Activated naive CD4-positive, alpha-beta T cell treated with anti-CD3 and anti-CD28 coated beads for 36 hours (primary cell): ENCODE measurements at regions of chr5 and their contacts with region 1.

Region 1: DNA sequence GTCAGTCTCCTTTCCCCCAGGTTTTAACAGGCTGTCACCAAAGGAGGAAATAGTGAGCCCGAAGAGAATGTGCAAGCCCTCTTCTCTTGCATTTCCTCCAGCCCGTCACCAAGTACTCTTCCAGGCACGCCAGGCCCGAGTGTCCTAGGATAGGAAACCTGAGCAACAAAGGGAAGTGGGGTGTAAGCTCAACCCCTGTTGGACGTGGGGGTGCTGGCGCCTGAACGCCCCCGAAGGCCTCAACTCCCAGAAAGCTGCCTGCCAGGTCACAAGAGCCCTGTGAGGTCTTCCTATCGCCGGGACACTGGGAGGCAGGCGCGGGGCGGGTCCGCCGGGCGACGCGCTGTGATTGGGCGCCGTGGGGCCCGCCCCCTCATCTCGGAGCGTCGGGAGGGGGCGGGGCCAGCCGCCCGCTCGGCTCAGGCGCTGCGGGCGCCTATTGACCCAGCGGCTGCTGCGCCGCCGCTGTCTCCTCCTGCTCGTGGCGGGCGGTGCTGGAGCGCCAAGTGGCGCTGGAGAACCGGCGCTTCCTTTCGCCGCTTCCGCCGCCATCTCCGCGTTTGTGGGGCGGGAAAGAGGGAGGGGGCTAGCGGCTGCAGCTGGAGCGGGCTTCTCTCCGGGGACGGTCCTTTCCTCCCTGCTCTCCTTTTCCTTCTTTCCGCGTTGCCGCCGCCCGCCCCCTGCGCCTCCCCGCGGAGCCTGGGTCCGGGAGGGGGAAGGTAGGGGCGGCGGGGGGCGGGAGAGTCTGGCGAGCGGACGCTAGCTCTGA is 572 bp upstream of the MAN2A1 start:
- DNase-seq: peak; percentile 81
- H3K4me3 Mint-ChIP-seq: peak overlapping the region; percentile 89
- H3K27ac Mint-ChIP-seq: peak overlapping the region; percentile 92
- H3K4me1 Mint-ChIP-seq: peaks cover 31% of the 10 kb centered on the region
- H3K27me3 Mint-ChIP-seq: no peaks in the 10 kb centered on the region

Region 2: DNA sequence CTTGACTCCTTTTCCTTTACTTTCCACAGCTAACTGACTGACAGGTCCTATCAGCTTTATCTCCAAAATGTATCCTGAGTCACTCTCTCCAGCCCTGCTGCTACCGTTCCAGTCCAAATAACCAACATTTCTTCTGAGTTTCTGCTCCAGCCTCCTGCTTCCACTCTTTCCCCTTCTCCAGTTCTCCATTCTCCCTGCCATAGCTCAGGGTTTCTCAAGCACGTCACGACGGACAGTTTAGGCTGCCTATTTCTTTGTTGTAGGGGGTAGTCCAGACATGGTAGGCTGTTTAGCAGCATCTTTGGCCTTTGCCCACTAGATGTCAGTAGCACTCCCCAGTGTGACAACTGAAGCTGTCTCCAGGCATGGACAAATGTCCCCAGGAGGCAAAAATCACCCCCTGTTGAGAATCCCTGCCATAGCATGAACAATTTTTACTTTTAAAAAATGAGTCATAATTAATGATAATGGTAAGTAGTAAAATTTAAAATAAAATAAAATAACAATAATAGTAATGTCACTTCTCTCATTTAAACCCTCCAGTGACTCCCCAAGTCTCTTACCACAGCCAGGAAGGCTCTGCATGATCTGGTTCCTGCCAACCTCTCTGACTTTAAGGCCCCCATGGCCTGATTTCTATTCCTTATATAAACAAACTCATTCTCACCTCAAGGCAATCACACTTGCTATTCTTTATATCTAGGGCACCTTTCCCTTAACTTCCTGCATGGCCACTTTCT is 1046.8 kb before region 1 on chr5:
- CTCF ChIA-PET with region 1: interaction called, 4 read pairs
- intact Hi-C with region 1: loop called (anchors 1 kb)
- DNase-seq: peak; percentile 77
- H3K4me3 Mint-ChIP-seq: peak overlapping the region; percentile 16
- H3K27ac Mint-ChIP-seq: no peak overlapping the region
- H3K4me1 Mint-ChIP-seq: peaks cover 2% of the 10 kb centered on the region
- H3K27me3 Mint-ChIP-seq: peaks cover 14% of the 10 kb centered on the region

Region 3: DNA sequence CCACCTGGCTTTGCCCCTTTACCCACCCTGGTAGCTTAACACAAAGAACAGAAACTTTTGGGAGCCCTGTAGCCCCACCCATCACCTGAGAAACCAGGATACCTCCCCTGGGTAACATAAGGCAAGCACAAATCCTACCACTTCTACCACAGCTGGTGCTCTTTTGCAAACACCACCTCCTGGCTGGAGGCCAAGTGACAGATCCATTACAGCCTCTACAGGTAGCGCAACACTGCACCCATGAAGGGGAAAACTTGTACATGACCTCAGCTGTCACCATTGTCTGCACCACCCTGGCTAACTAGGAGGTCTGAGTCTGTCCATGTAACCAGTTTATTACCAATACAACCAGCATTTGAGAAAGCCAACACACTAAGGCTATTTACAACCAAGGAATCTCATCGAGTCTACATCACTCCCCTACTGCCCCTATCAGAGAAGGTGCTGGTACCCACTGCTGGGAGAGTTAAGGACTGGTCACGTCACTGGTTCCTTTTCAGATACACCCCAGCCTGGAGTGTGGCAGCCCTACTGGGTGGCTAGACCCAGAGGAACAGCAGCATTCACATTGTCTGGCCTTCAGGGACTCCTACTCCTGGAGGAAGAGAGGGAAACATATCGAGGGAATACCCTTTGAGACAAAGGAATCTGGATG is 407.9 kb before region 1 on chr5:
- CTCF ChIA-PET with region 1: no interaction called
- intact Hi-C with region 1: no loop called
- DNase-seq: no peak
- H3K4me3 Mint-ChIP-seq: no peak overlapping the region
- H3K27ac Mint-ChIP-seq: no peak overlapping the region
- H3K4me1 Mint-ChIP-seq: no peaks in the 10 kb centered on the region
- H3K27me3 Mint-ChIP-seq: no peaks in the 10 kb centered on the region

Region 4: DNA sequence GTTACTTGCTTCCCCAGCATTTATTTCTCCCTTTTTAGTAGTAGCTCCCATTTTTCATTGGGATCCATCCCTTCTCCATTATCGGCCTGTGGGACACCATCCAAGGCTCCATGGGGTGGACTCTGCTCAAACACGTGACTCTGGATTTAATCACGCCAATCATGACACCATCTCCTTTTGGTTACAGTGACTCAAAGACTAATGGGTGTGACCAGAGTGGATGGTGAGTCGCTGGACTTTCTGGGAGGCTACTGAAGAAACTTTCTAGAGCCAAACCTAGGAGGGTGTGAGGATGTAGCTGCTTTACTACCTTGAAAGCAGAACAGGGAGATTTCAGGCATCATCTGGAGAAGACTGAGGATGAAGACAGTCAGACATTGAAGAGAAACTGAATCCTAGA is 372.5 kb before region 1 on chr5:
- CTCF ChIA-PET with region 1: no interaction called
- intact Hi-C with region 1: no loop called
- DNase-seq: no peak
- H3K4me3 Mint-ChIP-seq: no peak overlapping the region
- H3K27ac Mint-ChIP-seq: no peak overlapping the region
- H3K4me1 Mint-ChIP-seq: no peaks in the 10 kb centered on the region
- H3K27me3 Mint-ChIP-seq: no peaks in the 10 kb centered on the region

Region 5: GRCh38 chr5:109479260-109479860 is 209.8 kb before region 1 on chr5:
- CTCF ChIA-PET with region 1: no interaction called
- intact Hi-C with region 1: loop called (anchors 1 kb)
- DNase-seq: no peak
- H3K4me3 Mint-ChIP-seq: no peak overlapping the region
- H3K27ac Mint-ChIP-seq: no peak overlapping the region
- H3K4me1 Mint-ChIP-seq: no peaks in the 10 kb centered on the region
- H3K27me3 Mint-ChIP-seq: no peaks in the 10 kb centered on the region

Region 6: GRCh38 chr5:109921735-109922380 is 232.7 kb after region 1 on chr5:
- CTCF ChIA-PET with region 1: no interaction called
- intact Hi-C with region 1: loop called (anchors 1 kb)
- DNase-seq: peak; percentile 84
- H3K4me3 Mint-ChIP-seq: peak overlapping the region; percentile 55
- H3K27ac Mint-ChIP-seq: peak overlapping the region; percentile 93
- H3K4me1 Mint-ChIP-seq: peaks cover 35% of the 10 kb centered on the region
- H3K27me3 Mint-ChIP-seq: no peaks in the 10 kb centered on the region

Region 7: DNA sequence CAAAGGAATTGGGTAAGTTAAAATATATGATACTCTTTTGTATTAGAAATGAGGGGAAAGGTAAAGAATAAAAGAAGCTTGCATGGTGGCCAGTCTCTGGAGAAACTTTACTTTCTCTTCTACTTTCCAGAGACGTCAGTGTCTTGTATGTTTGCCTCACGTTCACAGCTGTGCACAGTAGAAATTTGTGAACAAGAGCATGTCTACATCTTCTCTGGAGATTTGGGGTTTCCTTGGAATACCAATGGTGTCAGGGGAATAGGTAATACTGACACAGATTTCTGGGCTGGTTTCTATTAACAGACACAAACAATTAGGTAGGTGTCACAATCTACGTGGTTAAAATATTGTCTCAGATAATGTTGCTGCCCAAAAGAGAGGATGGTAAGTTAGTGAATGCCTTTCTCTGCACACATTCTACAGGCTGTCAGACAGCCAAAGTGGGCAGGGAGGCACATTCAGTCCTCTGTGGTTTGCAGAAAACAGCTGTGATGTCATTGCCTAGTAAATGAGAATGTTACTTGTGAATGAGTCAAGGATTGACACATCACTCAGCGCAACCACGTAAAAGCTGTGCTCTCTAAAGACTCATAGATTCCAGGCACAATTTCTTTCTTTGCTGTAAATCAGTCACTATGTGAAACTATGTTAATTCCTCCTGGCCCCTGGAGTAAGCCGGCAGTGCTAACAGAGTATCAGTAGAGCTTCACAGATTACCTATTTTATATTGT is 397.7 kb after region 1 on chr5:
- CTCF ChIA-PET with region 1: no interaction called
- intact Hi-C with region 1: loop called (anchors 1 kb)
- DNase-seq: peak; percentile 89
- H3K4me3 Mint-ChIP-seq: peak overlapping the region; percentile 64
- H3K27ac Mint-ChIP-seq: peak overlapping the region; percentile 95
- H3K4me1 Mint-ChIP-seq: peaks cover 58% of the 10 kb centered on the region
- H3K27me3 Mint-ChIP-seq: no peaks in the 10 kb centered on the region

Region 8: GRCh38 chr5:110625376-110625999 is 936.3 kb after region 1 on chr5:
- CTCF ChIA-PET with region 1: interaction called, 3 read pairs
- intact Hi-C with region 1: loop called (anchors 2 kb)
- DNase-seq: no peak
- H3K4me3 Mint-ChIP-seq: no peak overlapping the region
- H3K27ac Mint-ChIP-seq: no peak overlapping the region
- H3K4me1 Mint-ChIP-seq: no peaks in the 10 kb centered on the region
- H3K27me3 Mint-ChIP-seq: peaks cover 3% of the 10 kb centered on the region